ENCODE measurements at regions of chr17 and their contacts with region 1.

Region 1: DNA sequence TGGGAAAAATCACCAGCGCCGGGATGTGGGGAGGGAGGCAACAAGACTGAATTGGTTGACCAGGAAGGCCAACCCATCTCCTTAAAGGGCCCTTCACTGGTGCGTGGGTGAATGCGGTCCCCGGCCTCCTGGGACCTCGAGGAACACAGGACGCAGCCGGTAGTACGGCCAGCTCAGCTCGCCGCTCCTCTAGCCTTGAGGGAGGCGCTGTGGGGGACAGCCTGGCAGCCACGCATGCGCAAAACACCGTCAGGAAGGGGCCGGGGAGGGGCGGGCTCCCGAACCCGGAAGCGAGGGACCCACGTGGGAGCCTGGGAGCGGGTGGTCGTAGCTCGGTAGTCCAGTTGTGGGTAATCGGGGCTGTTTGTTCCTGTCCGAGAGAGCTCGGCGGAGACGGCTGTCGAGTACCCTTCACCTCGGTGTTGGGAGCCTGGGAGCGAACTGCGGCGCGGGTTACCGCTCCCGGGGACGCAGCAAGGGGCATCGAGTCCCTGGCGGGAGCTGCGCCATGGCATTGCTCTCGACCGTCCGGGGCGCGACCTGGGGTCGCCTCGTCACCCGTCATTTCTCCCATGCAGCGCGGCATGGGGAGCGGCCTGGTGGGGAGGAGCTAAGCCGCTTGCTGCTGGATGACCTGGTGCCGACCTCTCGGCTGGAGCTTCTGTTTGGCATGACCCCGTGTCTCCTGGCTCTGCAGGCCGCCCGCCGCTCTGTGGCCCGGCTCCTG is at the start of gene MRM1:
- DNase-seq: peak; percentile 97
- total RNA-seq, gene MRM1: 7.0 TPM

Region 2: GRCh38 chr17:36534840-36535668 is 66.4 kb before region 1 on chr17 and contains the starts of genes MYO19 and PIGW:
- intact Hi-C with region 1: loop called (anchors 5 kb)
- DNase-seq: peak; percentile 93
- total RNA-seq, gene MYO19: 16.0 TPM
- total RNA-seq, gene PIGW: 4.3 TPM

Region 3: DNA sequence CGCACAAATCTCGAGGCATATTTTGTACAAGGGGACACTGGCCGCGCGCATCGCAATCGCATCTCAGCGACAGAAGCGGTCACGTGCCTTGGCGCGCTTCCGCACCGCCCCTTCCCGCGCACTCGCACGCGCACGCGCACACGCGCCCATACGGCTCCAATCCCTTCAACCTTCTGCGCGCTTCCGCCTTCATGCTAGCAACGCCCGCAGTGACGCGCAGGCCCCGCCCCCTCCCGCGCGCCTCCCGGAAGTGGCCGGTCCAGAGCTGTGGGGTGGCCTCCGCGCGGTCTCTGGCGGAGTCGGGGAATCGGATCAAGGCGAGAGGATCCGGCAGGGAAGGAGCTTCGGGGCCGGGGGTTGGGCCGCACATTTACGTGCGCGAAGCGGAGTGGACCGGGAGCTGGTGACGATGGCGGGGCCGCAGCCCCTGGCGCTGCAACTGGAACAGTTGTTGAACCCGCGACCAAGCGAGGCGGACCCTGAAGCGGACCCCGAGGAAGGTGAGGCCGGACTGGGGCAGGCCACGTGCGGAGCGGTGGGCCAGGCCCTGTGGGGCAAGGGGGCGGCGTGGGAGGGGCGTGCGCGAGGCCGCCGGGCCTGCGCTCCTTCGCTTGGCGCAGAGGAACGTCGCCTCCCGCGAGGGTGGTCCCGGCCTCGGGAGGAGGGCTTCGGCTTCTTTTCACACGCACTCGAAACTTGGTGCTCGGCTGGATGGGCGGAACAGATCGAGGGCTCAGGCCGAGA is 347.4 kb after region 1 on chr17 and contains the start of gene AATF:
- intact Hi-C with region 1: loop called (anchors 5 kb)
- DNase-seq: peak; percentile 98
- total RNA-seq, gene AATF: 32.7 TPM